ENCODE measurements at regions of chr5 and their contacts with region 1.

Region 1: DNA sequence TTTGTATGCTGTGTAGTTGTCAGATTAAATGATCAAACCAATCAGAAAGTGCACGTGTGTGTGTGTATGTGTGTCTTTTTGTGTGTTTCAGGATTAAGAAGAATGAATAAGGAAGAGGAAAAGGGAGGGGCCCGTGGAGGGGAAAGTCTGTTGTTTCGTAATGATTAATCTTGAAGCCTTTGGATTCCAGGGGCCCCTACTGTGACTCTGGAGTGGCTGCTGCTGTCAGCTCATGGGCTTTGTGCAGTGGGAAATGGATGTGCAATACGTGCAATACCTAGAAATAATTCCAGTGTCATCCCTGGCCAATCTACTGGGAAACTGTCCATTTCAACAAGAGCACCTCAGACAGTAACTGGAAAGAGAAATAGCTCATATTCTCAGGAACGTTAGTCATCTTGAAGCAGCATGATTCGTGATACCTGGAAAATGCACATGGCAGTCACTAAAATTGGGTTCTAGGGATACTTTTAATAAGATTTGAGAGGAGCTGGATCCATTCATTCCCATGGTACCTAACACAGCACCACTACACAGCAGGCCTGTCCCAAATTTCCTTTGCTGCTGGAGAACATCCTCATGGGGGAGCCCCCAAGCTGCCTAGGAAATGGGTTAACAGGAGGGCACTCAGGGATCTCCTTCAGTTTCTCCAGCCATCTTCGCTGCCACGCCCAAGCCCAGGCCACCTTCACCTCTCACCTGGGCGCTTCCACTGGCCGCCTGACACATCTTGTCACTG is 186.3 kb downstream of the NR3C1 start:
- DNase-seq: no peak
- H3K4me3 Mint-ChIP-seq: no peak overlapping the region
- H3K27ac Mint-ChIP-seq: peak overlapping the region; percentile 84
- H3K4me1 Mint-ChIP-seq: peaks cover 71% of the 10 kb centered on the region
- H3K27me3 Mint-ChIP-seq: no peaks in the 10 kb centered on the region

Region 2: GRCh38 chr5:143124593-143124992 is 92.6 kb before region 1 on chr5:
- intact Hi-C with region 1: loop called (anchors 5 kb)
- DNase-seq: no peak
- H3K4me3 Mint-ChIP-seq: no peak overlapping the region
- H3K27ac Mint-ChIP-seq: peak overlapping the region; percentile 37
- H3K4me1 Mint-ChIP-seq: peaks cover 48% of the 10 kb centered on the region
- H3K27me3 Mint-ChIP-seq: no peaks in the 10 kb centered on the region

Region 3: DNA sequence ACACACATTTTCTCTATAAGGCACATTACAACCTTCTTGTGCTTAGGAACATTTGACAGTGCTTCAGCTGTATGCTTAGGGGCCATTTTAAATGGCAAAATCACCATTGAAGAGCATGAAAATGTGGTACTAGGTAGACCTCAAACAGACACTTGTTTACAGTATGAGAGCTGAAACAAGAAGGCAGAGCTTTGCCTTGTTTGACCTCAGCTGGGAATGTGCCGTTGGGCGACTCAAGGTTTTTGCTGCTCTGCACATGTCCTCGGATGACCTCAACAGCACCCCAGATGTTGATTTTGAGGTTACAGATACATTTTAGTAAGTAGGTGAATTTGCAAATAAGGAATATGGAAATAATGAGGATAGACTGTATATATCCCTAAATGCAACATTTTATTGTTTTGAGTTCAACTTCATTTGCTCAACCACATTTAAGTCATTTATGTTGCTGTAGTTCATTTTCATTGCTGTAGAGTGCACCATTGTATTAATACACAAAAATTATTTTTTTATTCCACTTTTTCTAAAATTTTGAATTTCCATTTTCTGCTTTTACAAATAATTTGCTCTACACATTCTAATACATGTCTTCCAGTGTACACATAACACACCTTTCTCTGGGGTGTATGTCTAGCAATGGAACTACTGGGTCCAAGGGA is 20.5 kb before region 1 on chr5:
- intact Hi-C with region 1: loop called (anchors 1 kb)
- DNase-seq: no peak
- H3K4me3 Mint-ChIP-seq: no peak overlapping the region
- H3K27ac Mint-ChIP-seq: peak overlapping the region; percentile 67
- H3K4me1 Mint-ChIP-seq: peaks cover 15% of the 10 kb centered on the region
- H3K27me3 Mint-ChIP-seq: no peaks in the 10 kb centered on the region